ENCODE measurements at regions of chr9 and their contacts with region 1.

Region 1: GRCh38 chr9:121322037-121322775 is 47.8 kb downstream of the STOM start:
- H3K4me3 ChIP-seq: no peak overlapping the region
- H3K27ac ChIP-seq: no peak overlapping the region
- H3K4me1 ChIP-seq: no peaks in the 10 kb centered on the region
- CTCF ChIP-seq: no peak

Region 2: DNA sequence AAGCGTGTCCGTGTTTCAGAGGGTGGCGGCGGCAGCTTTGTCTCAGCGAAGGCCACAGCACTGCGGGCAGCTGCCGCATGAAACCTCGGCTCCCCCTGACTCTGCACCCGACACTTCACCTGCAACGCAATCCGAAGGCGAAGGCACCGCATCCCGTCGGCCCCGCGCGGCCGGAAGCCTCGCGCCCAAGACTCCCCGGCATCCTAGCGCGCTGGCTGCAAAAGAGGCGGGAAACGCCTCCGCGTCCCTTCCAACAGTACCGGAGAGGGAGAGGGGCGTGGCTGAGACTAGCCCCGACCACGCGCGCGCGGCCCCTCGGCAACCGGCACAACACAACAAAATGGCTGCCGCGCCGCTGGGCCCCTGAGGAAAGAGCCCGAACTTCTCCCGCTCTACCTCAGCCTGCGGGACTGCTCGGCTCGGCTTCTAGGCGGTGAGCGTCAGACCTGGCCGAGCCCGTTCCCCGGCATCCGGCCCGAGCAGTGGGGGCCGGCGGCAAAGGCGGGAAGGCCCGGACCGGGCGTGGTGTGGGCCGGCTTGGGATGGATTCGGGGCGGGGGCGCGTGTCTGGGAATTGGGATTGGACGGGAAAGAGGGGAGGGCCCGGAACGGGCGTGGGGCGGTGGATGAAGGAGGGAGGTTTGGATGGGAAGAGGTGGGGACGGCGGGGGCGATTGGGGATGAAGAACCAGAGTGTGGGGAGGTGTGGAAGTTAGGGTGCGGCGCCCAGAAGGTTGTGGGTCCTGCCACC is 247.4 kb before region 1 on chr9 and contains the start of gene CNTRL:
- CTCF ChIA-PET with region 1: no interaction called
- POLR2A ChIA-PET with region 1: no interaction called
- H3K4me3 ChIP-seq: peak within 1 kb of the TSS; percentile 89
- H3K27ac ChIP-seq: peak within 1 kb of the TSS; percentile 75
- H3K4me1 ChIP-seq: peaks cover 2% of the 10 kb centered on the region; the same call in 1 of the 2 replicates
- CTCF ChIP-seq: no peak

Region 3: DNA sequence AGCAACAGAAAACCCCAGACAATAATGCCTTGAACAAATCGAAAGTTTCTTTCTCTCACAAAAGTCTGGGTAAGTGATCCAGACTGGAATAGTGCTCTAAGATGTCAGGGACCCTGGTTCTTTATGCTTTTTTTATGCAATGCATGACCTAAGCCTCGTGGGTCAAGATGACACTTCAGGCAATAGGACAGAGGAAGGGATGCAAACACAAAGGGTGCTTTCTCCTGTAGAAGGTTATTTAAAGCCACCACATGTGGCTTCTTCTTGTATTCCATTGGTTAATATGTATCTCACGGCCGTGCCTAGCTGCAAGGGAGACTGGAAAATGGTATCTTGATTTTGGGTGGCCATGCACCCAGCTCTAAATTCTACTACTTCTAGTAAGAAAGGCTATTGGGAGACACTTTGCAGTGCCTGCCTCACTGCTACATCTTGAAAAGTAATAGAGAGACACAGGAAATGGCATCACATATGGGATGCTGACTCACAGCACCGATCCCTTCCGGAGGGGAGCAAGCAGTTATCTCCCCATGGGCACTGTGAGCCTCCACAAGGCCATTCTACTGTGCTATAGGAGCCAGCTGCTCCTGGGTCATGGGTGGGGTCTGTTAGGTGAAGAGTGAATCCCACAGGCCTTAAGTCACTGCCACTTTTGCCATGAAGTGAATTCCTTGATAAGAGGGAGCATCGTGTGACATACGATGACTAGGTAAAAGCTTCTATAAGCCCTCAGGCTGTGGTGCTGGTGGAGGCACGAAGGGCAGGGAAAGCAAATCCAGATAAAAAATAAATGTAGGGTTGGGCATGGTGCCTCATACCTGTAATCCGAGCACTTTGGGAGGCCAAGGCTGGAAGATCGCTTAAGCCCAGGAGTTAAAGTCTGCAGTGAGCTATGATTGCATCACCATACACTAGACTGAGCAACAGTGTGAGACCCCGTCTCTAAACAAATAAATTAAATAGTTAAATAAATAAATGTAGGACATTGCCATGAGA is 88.0 kb before region 1 on chr9:
- CTCF ChIA-PET with region 1: interaction called, 11 read pairs
- POLR2A ChIA-PET with region 1: no interaction called
- H3K4me3 ChIP-seq: no peak overlapping the region
- H3K27ac ChIP-seq: no peak overlapping the region
- H3K4me1 ChIP-seq: no peaks in the 10 kb centered on the region
- CTCF ChIP-seq: no peak

Region 4: GRCh38 chr9:121305269-121305994 is 16.8 kb before region 1 on chr9:
- CTCF ChIA-PET with region 1: interaction called, 27 read pairs
- POLR2A ChIA-PET with region 1: interaction called, 3 read pairs
- H3K4me3 ChIP-seq: no peak overlapping the region
- H3K27ac ChIP-seq: no peak overlapping the region
- H3K4me1 ChIP-seq: no peaks in the 10 kb centered on the region
- CTCF ChIP-seq: no peak

Region 5: GRCh38 chr9:121362813-121363621 is 40.8 kb after region 1 on chr9:
- CTCF ChIA-PET with region 1: interaction called, 18 read pairs
- POLR2A ChIA-PET with region 1: no interaction called
- H3K4me3 ChIP-seq: no peak overlapping the region
- H3K27ac ChIP-seq: no peak overlapping the region
- H3K4me1 ChIP-seq: peaks cover 7% of the 10 kb centered on the region
- CTCF ChIP-seq: no peak

Region 6: GRCh38 chr9:121393318-121393717 is 71.1 kb after region 1 on chr9:
- CTCF ChIA-PET with region 1: interaction called, 236 read pairs
- POLR2A ChIA-PET with region 1: interaction called, 3 read pairs
- H3K4me3 ChIP-seq: no peak overlapping the region
- H3K27ac ChIP-seq: no peak overlapping the region
- H3K4me1 ChIP-seq: no peaks in the 10 kb centered on the region
- CTCF ChIP-seq: no peak